Activated naive CD4-positive, alpha-beta T cell treated with anti-CD3 and anti-CD28 coated beads, Interleukin-2, amount 10 ng/mL, durations not matched to agents 7 days and 5 days (primary cell): ENCODE measurements at regions of chr10 and their contacts with region 1.

Region 1: GRCh38 chr10:100046021-100046486 is 35.6 kb downstream of the CPN1 start:
- DNase-seq: peak; percentile 87
- H3K4me3 Mint-ChIP-seq: no peak overlapping the region
- H3K27ac Mint-ChIP-seq: peak overlapping the region; percentile 26
- H3K4me1 Mint-ChIP-seq: no peaks in the 10 kb centered on the region
- H3K27me3 Mint-ChIP-seq: peaks cover 20% of the 10 kb centered on the region

Region 2: GRCh38 chr10:99834410-99834809 is 211.6 kb before region 1 on chr10:
- CTCF ChIA-PET with region 1: interaction called, 10 read pairs
- DNase-seq: no peak
- H3K4me3 Mint-ChIP-seq: no peak overlapping the region
- H3K27ac Mint-ChIP-seq: no peak overlapping the region
- H3K4me1 Mint-ChIP-seq: no peaks in the 10 kb centered on the region
- H3K27me3 Mint-ChIP-seq: no peaks in the 10 kb centered on the region

Region 3: GRCh38 chr10:99845837-99846382 is 200.1 kb before region 1 on chr10:
- CTCF ChIA-PET with region 1: interaction called, 177 read pairs
- DNase-seq: peak; percentile 79
- H3K4me3 Mint-ChIP-seq: no peak overlapping the region
- H3K27ac Mint-ChIP-seq: no peak overlapping the region
- H3K4me1 Mint-ChIP-seq: peaks cover 9% of the 10 kb centered on the region
- H3K27me3 Mint-ChIP-seq: peaks cover 9% of the 10 kb centered on the region

Region 4: DNA sequence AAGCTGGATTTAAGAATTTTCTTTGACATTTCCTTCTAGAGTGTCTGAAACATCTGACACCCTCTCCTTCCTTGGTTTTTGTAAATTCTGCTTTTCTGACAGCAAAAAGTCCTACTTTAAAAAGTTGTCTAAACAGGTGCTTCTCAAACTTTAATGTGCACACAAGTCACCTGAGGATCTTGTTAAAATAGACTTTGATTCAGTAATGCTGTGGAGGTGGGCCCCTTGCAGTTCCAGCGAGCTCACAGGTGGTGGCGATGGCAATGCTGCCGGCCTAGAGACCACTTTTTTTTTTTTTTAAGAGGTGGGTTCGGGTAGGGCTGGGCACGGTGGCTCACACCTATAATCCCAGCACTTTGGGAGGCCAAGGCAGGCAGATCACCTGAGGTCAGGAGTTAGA is 186.5 kb before region 1 on chr10:
- CTCF ChIA-PET with region 1: interaction called, 12 read pairs
- DNase-seq: no peak
- H3K4me3 Mint-ChIP-seq: no peak overlapping the region
- H3K27ac Mint-ChIP-seq: no peak overlapping the region
- H3K4me1 Mint-ChIP-seq: no peaks in the 10 kb centered on the region
- H3K27me3 Mint-ChIP-seq: peaks cover 48% of the 10 kb centered on the region

Region 5: GRCh38 chr10:99905971-99906370 is 140.1 kb before region 1 on chr10:
- CTCF ChIA-PET with region 1: no interaction called
- DNase-seq: no peak
- H3K4me3 Mint-ChIP-seq: no peak overlapping the region
- H3K27ac Mint-ChIP-seq: no peak overlapping the region
- H3K4me1 Mint-ChIP-seq: peaks cover 9% of the 10 kb centered on the region
- H3K27me3 Mint-ChIP-seq: no peaks in the 10 kb centered on the region

Region 6: GRCh38 chr10:99993701-99994689 is 52.1 kb before region 1 on chr10:
- CTCF ChIA-PET with region 1: interaction called, 13 read pairs
- DNase-seq: peak; percentile 76
- H3K4me3 Mint-ChIP-seq: peak overlapping the region; percentile 11
- H3K27ac Mint-ChIP-seq: peak overlapping the region; percentile 79
- H3K4me1 Mint-ChIP-seq: peaks cover 25% of the 10 kb centered on the region
- H3K27me3 Mint-ChIP-seq: no peaks in the 10 kb centered on the region

Region 7: DNA sequence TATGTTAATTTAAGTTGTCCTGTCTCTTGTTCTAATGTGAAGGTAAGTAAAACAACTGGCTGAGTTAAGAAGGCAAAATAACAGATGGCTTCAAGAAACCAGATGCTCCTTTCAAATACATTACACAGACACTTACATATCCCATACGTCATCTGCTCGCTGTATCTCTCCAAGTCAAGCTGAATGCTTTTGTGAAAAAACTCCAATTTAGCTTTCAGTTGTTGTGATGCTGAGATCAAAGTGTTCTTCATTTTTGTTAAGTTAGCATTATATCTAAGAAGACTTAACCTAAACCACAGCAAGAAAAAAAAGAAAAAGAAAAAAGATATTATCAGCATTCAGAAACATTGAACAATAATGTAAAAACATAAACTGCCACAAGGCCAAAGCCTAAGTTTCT is 158.3 kb after region 1 on chr10:
- CTCF ChIA-PET with region 1: no interaction called
- DNase-seq: no peak
- H3K4me3 Mint-ChIP-seq: no peak overlapping the region
- H3K27ac Mint-ChIP-seq: no peak overlapping the region
- H3K4me1 Mint-ChIP-seq: no peaks in the 10 kb centered on the region
- H3K27me3 Mint-ChIP-seq: no peaks in the 10 kb centered on the region

Region 8: GRCh38 chr10:100446130-100446761 is 400.2 kb after region 1 on chr10:
- CTCF ChIA-PET with region 1: no interaction called
- DNase-seq: no peak
- H3K4me3 Mint-ChIP-seq: no peak overlapping the region
- H3K27ac Mint-ChIP-seq: no peak overlapping the region
- H3K4me1 Mint-ChIP-seq: no peaks in the 10 kb centered on the region
- H3K27me3 Mint-ChIP-seq: peaks cover 11% of the 10 kb centered on the region